ENCODE measurements at regions of chr9 and their contacts with region 1.

Region 1: GRCh38 chr9:104927912-104928740 is at the start of gene ABCA1:
- DNase-seq: peak; percentile 97 to 99
- H3K4me3 ChIP-seq: peak within 1 kb of the TSS; percentile 86 to 90
- H3K27ac ChIP-seq: peak within 1 kb of the TSS; percentile 82 to 92
- H3K4me1 ChIP-seq: peaks cover 0 to 32% (median 7%) of the 10 kb centered on the region in 4 donors
- H3K27me3 ChIP-seq: no peaks in the 10 kb centered on the region
- CTCF ChIP-seq: no peak

Region 2: DNA sequence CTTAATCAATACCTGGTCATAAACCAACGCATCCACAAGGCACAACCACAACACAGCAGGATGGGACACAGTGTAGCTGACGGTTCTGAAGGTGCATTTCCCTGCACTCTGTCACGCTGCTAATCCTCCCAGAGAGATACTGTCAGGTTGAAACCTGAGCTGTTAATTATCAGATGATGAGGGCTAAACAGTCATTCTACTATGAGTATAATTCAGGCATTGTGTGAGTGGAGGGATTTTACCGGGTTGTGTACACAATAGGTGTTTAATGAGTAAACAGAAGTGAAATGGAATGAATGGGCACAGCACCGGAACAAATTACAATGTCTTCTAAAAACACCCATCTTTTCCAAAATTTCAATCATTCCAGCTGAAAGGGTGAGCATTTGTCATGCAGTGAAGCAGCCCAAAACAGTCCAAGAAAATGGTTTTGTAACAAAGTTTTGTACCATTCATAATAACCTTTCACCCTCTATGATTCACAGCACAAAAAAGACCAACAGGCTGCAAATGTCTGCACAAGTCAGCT is 71.6 kb before region 1 on chr9:
- intact Hi-C with region 1: loop called (anchors 5 kb)
- DNase-seq: no peak
- H3K4me3 ChIP-seq: no peak overlapping the region
- H3K27ac ChIP-seq: no peak overlapping the region
- H3K4me1 ChIP-seq: peaks cover 0 to 58% (median 11%) of the 10 kb centered on the region in 4 donors
- H3K27me3 ChIP-seq: no peaks in the 10 kb centered on the region
- CTCF ChIP-seq: no peak

Region 3: GRCh38 chr9:104968025-104968982 is 40.2 kb after region 1 on chr9:
- intact Hi-C with region 1: loop called (anchors 1 kb)
- DNase-seq: peak; percentile 91 to 96
- H3K4me3 ChIP-seq: peak overlapping the region; percentile 64 to 74
- H3K27ac ChIP-seq: peak overlapping the region; percentile 94 to 96
- H3K4me1 ChIP-seq: peaks cover 0 to 28% (median 11%) of the 10 kb centered on the region in 4 donors
- H3K27me3 ChIP-seq: no peaks in the 10 kb centered on the region
- CTCF ChIP-seq: no peak

Region 4: DNA sequence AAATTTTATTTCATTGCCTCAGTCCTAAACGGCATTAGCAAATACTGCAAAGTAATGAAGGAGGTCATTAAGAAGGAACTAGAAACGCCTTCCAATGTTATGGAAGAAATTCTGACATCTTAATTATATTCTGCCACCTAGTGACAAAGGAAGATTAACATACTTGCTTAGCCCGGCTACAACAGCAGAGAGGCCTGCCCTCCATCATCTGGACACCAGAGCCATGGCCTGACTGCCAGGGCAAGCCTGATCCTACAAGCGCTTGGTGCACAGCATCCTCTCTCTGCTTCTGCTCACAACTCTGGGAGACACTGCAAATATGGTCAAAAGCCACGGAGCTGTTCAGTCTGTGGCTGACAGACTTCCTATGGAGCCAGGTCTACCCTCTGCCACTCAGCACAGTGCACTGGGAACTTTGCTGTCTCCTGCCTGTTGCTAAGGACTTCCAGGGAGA is 229.0 kb after region 1 on chr9:
- intact Hi-C with region 1: loop called (anchors 1 kb)
- DNase-seq: peak; percentile 54 to 82
- H3K4me3 ChIP-seq: no peak overlapping the region
- H3K27ac ChIP-seq: peak overlapping the region in 1 of 2 donors; percentile 26
- H3K4me1 ChIP-seq: peaks cover 0 to 5% (median 0%) of the 10 kb centered on the region in 4 donors
- H3K27me3 ChIP-seq: no peaks in the 10 kb centered on the region
- CTCF ChIP-seq: peak; percentile 43 to 64

Region 5: GRCh38 chr9:105244003-105244733 is 316.0 kb after region 1 on chr9 and contains the start of gene SLC44A1:
- intact Hi-C with region 1: loop called (anchors 2 kb)
- DNase-seq: peak; percentile 98 to 99
- H3K4me3 ChIP-seq: peak within 1 kb of the TSS; percentile 75 to 90
- H3K27ac ChIP-seq: peak within 1 kb of the TSS; percentile 76 to 87
- H3K4me1 ChIP-seq: peaks cover 0 to 46% (median 26%) of the 10 kb centered on the region in 4 donors
- H3K27me3 ChIP-seq: no peaks in the 10 kb centered on the region
- CTCF ChIP-seq: no peak

Region 6: DNA sequence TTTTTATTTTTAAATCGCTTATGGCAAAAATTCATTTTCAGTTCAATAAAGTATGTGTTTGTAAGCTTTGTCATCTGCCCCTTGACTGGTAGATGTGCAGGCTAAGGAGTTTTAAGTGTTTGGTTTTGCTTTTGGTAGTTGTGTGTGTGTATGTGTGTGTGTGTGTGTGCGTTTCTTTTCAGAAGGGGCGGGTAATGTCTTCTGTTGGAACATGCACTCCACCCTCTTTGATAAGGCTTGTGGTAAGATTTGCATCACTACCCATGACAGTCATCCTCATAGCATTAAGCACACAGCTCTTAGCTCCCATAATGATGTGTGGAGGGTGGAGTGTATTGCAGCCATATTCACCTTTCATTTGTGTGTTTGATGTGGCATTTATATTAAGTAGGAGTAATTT is 427.7 kb after region 1 on chr9:
- intact Hi-C with region 1: no loop called
- DNase-seq: no peak
- H3K4me3 ChIP-seq: no peak overlapping the region
- H3K27ac ChIP-seq: no peak overlapping the region
- H3K4me1 ChIP-seq: no peaks in the 10 kb centered on the region
- H3K27me3 ChIP-seq: no peaks in the 10 kb centered on the region
- CTCF ChIP-seq: no peak

Region 7: GRCh38 chr9:105414947-105415661 is 487.0 kb after region 1 on chr9:
- intact Hi-C with region 1: loop called (anchors 5 kb)
- DNase-seq: peak in 1 of 2 donors; percentile 43
- H3K4me3 ChIP-seq: no peak overlapping the region
- H3K27ac ChIP-seq: no peak overlapping the region
- H3K4me1 ChIP-seq: peaks cover 0 to 12% (median 6%) of the 10 kb centered on the region in 4 donors
- H3K27me3 ChIP-seq: no peaks in the 10 kb centered on the region
- CTCF ChIP-seq: peak; percentile 77 to 90

Measured in tibial artery (tissue), 4 donors.